Endothelial cell of umbilical vein (primary cell): ENCODE measurements at regions of chr21 and their contacts with region 1.

Region 1: GRCh38 chr21:16454399-16454798 is 724.6 kb downstream of the USP25 start:
- DNase-seq: peak; percentile 49
- H3K4me3 ChIP-seq: no peak overlapping the region
- H3K27ac ChIP-seq: no peak overlapping the region
- H3K4me1 ChIP-seq: no peaks in the 10 kb centered on the region
- H3K27me3 ChIP-seq: no peaks in the 10 kb centered on the region
- CTCF ChIP-seq: no peak
- POLR2A ChIP-seq: no peak

Region 2: GRCh38 chr21:16013570-16013969 is 440.8 kb before region 1 on chr21:
- CTCF ChIA-PET with region 1: no interaction called
- POLR2A ChIA-PET with region 1: no interaction called
- dilution Hi-C with region 1: no loop called
- intact Hi-C with region 1: no loop called
- DNase-seq: no peak
- H3K4me3 ChIP-seq: no peak overlapping the region
- H3K27ac ChIP-seq: no peak overlapping the region
- H3K4me1 ChIP-seq: no peaks in the 10 kb centered on the region
- H3K27me3 ChIP-seq: no peaks in the 10 kb centered on the region
- CTCF ChIP-seq: no peak
- POLR2A ChIP-seq: no peak

Region 3: DNA sequence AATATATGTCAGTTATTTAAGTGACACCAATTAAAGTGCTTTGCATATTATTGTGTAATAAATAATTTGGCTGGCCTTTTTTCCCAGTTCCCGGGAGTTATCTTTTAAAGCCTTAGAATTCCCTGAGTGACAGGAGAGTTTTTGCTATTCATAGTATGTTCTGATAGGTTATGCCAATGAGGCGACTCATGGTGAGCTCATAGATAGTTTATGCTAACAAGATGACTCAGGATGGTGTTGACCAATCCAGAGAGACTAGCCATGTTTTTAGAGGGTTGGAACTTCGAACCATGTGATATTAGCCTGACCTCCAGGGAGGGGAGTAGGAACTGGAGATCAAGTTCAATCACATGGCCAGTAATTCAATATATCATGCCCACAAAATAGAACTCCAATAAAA is 413.8 kb before region 1 on chr21:
- CTCF ChIA-PET with region 1: no interaction called
- POLR2A ChIA-PET with region 1: no interaction called
- dilution Hi-C with region 1: no loop called
- intact Hi-C with region 1: no loop called
- DNase-seq: no peak
- H3K4me3 ChIP-seq: no peak overlapping the region
- H3K27ac ChIP-seq: no peak overlapping the region
- H3K4me1 ChIP-seq: no peaks in the 10 kb centered on the region
- H3K27me3 ChIP-seq: no peaks in the 10 kb centered on the region
- CTCF ChIP-seq: no peak
- POLR2A ChIP-seq: no peak

Region 4: GRCh38 chr21:16504766-16505165 is 50.4 kb after region 1 on chr21:
- CTCF ChIA-PET with region 1: no interaction called
- POLR2A ChIA-PET with region 1: no interaction called
- dilution Hi-C with region 1: no loop called
- intact Hi-C with region 1: no loop called
- DNase-seq: no peak
- H3K4me3 ChIP-seq: no peak overlapping the region
- H3K27ac ChIP-seq: no peak overlapping the region
- H3K4me1 ChIP-seq: no peaks in the 10 kb centered on the region
- H3K27me3 ChIP-seq: no peaks in the 10 kb centered on the region
- CTCF ChIP-seq: no peak
- POLR2A ChIP-seq: no peak

Region 5: DNA sequence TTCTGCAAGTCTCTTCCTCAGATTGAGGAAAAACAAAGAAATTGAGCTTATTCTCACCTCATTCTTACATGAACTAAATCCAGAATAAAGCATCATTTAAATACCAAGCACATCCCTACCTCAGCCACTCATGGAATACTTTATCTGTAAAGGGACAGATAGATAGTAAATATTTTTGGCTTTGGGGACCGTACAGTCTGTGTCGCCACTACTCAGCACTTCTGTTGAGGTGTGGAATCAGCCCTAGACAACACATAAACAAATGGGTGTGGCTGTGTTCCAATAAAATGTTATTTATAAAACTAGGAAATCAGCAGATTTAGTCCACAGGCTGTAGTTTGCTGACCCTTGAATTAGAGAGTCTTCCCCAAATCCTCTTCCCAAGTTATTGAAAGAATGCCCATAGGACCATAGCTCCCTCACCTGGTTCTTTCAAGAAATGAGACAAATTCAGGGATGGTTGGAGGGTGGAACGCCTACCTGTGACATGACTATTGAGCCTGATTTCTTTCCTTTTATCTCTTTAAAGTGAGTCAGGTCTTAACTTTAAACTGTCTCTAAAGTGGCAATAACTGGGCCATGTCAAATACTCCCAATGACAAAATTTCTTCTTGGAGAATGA is 153.9 kb after region 1 on chr21:
- CTCF ChIA-PET with region 1: interaction called, 3 read pairs
- POLR2A ChIA-PET with region 1: no interaction called
- dilution Hi-C with region 1: no loop called
- intact Hi-C with region 1: loop called (anchors 5 kb)
- DNase-seq: no peak
- H3K4me3 ChIP-seq: no peak overlapping the region
- H3K27ac ChIP-seq: no peak overlapping the region
- H3K4me1 ChIP-seq: no peaks in the 10 kb centered on the region
- H3K27me3 ChIP-seq: no peaks in the 10 kb centered on the region
- CTCF ChIP-seq: no peak
- POLR2A ChIP-seq: no peak

Region 6: GRCh38 chr21:17045214-17045853 is 590.9 kb after region 1 on chr21:
- CTCF ChIA-PET with region 1: interaction called, 4 read pairs
- POLR2A ChIA-PET with region 1: no interaction called
- dilution Hi-C with region 1: no loop called
- intact Hi-C with region 1: loop called (anchors 2 kb)
- DNase-seq: peak; percentile 37
- H3K4me3 ChIP-seq: no peak overlapping the region
- H3K27ac ChIP-seq: no peak overlapping the region
- H3K4me1 ChIP-seq: no peaks in the 10 kb centered on the region
- H3K27me3 ChIP-seq: no peaks in the 10 kb centered on the region
- CTCF ChIP-seq: peak; percentile 40 to 41
- POLR2A ChIP-seq: no peak